IMR-90 (cell line): ENCODE measurements at regions of chr4 and their contacts with region 1.

Region 1: GRCh38 chr4:3936184-3936583 is 170.0 kb downstream of the ADRA2C start:
- DNase-seq: no peak
- ATAC-seq: no peak
- H3K4me3 ChIP-seq: no peak overlapping the region
- H3K27ac ChIP-seq: no peak overlapping the region
- H3K4me1 ChIP-seq: no peaks in the 10 kb centered on the region
- H3K27me3 ChIP-seq: no peaks in the 10 kb centered on the region; the same call in 1 of the 2 replicates
- CTCF ChIP-seq: no peak
- POLR2A ChIP-seq: no peak
- RAD21 ChIP-seq: no peak

Region 2: DNA sequence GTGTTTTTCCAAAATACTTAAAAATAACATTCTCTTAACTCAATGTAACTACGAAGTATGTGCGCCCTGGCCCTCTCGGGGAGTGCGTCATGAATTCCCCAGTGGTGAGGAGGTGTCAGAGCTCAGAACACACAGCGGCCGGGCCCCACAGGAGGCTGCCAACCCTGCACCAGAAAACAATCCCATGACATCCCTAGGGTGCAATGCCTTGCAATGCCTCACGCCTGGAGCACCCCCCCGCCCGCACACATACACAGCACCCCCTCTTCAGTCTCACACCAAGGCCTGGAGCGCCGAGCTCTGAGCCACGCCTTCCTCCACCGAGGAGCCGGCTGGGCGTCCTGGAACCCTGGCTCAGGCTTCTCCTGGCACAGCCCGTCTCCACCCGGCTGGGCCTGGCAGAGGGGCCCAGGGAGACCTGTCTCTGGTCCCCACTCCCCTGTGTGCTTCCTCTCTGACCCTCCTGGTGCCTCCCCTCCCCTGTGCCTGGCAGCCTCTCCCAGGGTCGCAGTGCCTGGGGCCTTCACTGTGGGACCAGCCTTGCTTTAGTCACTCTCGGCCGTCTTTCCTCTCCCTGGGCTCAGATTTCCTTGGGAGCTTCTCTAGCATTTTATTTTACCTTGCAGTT is 278.2 kb before region 1 on chr4:
- CTCF ChIA-PET with region 1: no interaction called
- POLR2A ChIA-PET with region 1: no interaction called
- dilution Hi-C with region 1: no loop called
- in situ Hi-C with region 1: no loop called
- intact Hi-C with region 1: no loop called
- DNase-seq: peak; percentile 90
- ATAC-seq: peak; percentile 97
- H3K4me3 ChIP-seq: no peak overlapping the region
- H3K27ac ChIP-seq: peak overlapping the region; percentile 4; the same call in 1 of the 2 replicates
- H3K4me1 ChIP-seq: peaks cover 8% of the 10 kb centered on the region; the same call in 1 of the 2 replicates
- H3K27me3 ChIP-seq: peaks cover 55% of the 10 kb centered on the region
- CTCF ChIP-seq: no peak
- POLR2A ChIP-seq: no peak
- RAD21 ChIP-seq: no peak; the same call in 1 of the 2 replicates

Region 3: DNA sequence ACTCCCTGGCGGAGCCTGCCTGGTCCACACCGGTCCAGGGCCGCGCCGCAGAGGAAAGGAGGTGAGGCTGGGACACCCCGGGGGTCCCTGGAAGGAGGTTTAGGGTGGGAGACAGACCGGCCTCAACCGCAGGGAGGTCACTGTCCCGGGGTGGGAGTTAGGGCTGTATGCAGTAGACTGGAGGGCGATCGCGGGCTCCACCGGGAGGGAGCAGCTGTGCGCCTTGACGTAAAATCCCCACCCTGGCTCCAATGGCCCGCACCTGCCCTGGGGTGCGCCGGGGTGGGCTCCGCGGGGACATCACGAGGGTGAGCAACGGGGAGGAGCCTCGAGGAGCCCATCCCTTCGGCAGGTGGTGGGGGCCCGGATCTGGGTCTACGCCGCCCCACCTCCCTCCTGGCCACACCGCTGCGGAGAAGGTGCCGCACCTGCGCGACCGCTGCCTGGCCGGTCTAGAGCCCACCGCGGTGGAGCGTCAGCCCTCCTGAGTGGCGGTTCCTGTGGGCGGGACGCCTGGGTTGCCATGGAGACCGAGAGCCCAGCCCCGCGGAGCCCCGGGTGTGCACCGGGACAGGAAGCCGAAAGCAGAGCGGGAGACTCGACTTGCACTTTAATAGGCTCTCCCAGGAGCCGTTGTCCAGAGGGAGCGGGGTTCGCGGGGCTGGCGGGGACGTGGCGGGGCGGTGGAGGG is 64.9 kb before region 1 on chr4:
- CTCF ChIA-PET with region 1: no interaction called
- POLR2A ChIA-PET with region 1: no interaction called
- dilution Hi-C with region 1: no loop called
- in situ Hi-C with region 1: no loop called
- intact Hi-C with region 1: loop called (anchors 5 kb)
- DNase-seq: no peak
- ATAC-seq: peak; percentile 69
- H3K4me3 ChIP-seq: no peak overlapping the region
- H3K27ac ChIP-seq: no peak overlapping the region
- H3K4me1 ChIP-seq: no peaks in the 10 kb centered on the region; the same call in 1 of the 2 replicates
- H3K27me3 ChIP-seq: peaks cover 66% of the 10 kb centered on the region
- CTCF ChIP-seq: peak; percentile 40
- POLR2A ChIP-seq: no peak
- RAD21 ChIP-seq: peak; percentile 39

Region 4: GRCh38 chr4:3898098-3898497 is 38.1 kb before region 1 on chr4:
- CTCF ChIA-PET with region 1: no interaction called
- POLR2A ChIA-PET with region 1: no interaction called
- dilution Hi-C with region 1: no loop called
- in situ Hi-C with region 1: loop called (anchors 10 kb)
- intact Hi-C with region 1: loop called (anchors 5 kb)
- DNase-seq: no peak
- ATAC-seq: no peak
- H3K4me3 ChIP-seq: no peak overlapping the region
- H3K27ac ChIP-seq: no peak overlapping the region
- H3K4me1 ChIP-seq: no peaks in the 10 kb centered on the region
- H3K27me3 ChIP-seq: no peaks in the 10 kb centered on the region
- CTCF ChIP-seq: no peak
- POLR2A ChIP-seq: no peak
- RAD21 ChIP-seq: no peak

Region 5: GRCh38 chr4:5079581-5079980 is 1143.4 kb after region 1 on chr4:
- CTCF ChIA-PET with region 1: no interaction called
- POLR2A ChIA-PET with region 1: no interaction called
- dilution Hi-C with region 1: no loop called
- in situ Hi-C with region 1: no loop called
- intact Hi-C with region 1: no loop called
- DNase-seq: peak; percentile 49
- ATAC-seq: peak; percentile 56
- H3K4me3 ChIP-seq: no peak overlapping the region
- H3K27ac ChIP-seq: no peak overlapping the region
- H3K4me1 ChIP-seq: no peaks in the 10 kb centered on the region
- H3K27me3 ChIP-seq: no peaks in the 10 kb centered on the region
- CTCF ChIP-seq: no peak
- POLR2A ChIP-seq: no peak
- RAD21 ChIP-seq: no peak